ENCODE measurements at regions of chr14 and their contacts with region 1.

Region 1: DNA sequence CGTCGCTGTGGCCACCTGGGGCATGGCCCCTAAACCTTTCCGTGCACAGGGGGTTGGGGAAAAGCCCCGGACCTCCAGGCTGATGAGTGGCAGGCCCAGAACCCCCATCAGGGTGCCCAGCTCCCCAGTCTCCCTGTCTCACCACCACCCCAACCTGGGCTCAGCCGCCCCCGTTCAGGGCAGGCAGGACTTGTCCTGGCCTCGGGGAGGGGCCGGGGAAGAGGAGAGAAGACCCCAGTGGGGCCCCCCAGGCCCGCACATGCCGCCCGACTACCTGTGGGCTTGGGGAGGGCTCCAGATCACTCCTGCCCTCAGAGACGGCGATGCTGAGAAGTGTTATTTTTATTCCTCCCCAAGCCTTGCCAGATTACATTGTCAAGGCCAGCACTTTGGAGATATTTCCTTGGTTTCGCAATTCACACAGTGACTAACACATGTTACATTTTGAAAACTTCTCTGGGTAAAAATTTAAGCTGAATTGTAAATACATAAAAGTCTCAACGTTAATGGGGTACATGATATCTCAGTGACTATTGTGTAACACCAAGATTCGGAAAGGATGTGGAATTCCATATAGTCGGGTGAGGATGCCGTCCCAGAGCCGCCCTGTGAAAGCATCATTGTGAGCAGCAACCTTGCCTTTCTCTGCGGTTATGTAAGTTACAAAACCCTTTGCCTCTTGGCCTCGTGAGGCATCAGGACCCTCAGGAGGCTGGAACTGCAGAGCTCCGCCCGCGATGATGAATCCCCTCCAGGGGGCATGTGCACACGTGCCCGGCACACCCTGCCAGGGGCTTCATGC is 85.6 kb upstream of the DIO3 start:
- DNase-seq: peak; percentile 88
- ATAC-seq: peak; percentile 6; the same call in 1 of the 2 replicates
- H3K4me3 ChIP-seq: peak overlapping the region; percentile 72
- H3K27ac ChIP-seq: peak overlapping the region; percentile 99
- H3K4me1 ChIP-seq: peaks cover 61% of the 10 kb centered on the region
- H3K27me3 ChIP-seq: no peaks in the 10 kb centered on the region
- CTCF ChIP-seq: no peak

Region 2: GRCh38 chr14:101072945-101073597 is 402.6 kb before region 1 on chr14:
- CTCF ChIA-PET with region 1: interaction called, 3 read pairs
- POLR2A ChIA-PET with region 1: no interaction called
- intact Hi-C with region 1: loop called (anchors 5 kb)
- DNase-seq: peak; percentile 99
- ATAC-seq: peak; percentile 96
- H3K4me3 ChIP-seq: no peak overlapping the region; the same call in 1 of the 2 replicates
- H3K27ac ChIP-seq: peak overlapping the region; percentile 87
- H3K4me1 ChIP-seq: peaks cover 25% of the 10 kb centered on the region
- H3K27me3 ChIP-seq: no peaks in the 10 kb centered on the region
- CTCF ChIP-seq: peak; percentile 37

Region 3: DNA sequence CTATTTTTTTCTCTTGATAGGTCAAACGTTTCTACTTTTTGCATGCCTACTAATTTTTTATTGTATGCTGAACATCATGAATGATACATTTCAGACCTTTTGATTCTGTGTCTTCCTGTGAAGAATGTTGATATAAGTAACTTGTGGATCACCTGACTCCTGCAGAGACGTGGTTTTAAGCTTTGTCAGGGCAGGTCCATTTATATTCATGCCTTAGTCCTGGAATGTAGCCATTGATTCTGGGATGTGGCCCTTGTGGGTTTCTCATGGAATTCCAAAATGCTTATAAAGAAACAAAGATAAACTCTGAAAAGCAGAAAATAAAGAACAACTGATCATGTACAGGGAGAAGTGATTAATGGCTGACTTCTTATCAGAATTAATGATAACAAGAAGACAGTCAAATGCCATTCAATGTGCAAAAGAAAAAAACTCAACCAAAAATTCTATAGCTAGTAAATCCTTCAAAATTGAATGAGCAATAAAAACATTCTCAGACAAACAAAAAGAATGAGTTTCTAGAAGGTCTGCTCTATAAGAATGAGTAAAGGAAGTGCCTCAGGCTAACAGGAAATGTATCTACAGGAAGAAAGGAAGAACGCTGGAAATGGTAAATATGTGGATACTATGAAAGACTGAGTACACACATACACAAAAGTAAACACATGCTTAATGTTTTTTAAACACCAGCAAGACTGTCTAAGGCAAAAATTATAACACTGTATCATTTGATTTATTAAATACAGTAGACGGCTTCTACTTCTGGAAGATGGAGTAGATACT is 199.2 kb before region 1 on chr14:
- CTCF ChIA-PET with region 1: no interaction called
- POLR2A ChIA-PET with region 1: no interaction called
- intact Hi-C with region 1: loop called (anchors 1 kb)
- DNase-seq: peak; percentile 92
- ATAC-seq: peak; percentile 97
- H3K4me3 ChIP-seq: peak overlapping the region; percentile 20; the same call in 1 of the 2 replicates
- H3K27ac ChIP-seq: peak overlapping the region; percentile 78
- H3K4me1 ChIP-seq: peaks cover 28% of the 10 kb centered on the region
- H3K27me3 ChIP-seq: no peaks in the 10 kb centered on the region
- CTCF ChIP-seq: no peak

Measured in PC-3 (cell line).